Activated naive CD4-positive, alpha-beta T cell treated with anti-CD3 and anti-CD28 coated beads for 36 hours (primary cell): ENCODE measurements at regions of chr14 and their contacts with region 1.

Region 1: DNA sequence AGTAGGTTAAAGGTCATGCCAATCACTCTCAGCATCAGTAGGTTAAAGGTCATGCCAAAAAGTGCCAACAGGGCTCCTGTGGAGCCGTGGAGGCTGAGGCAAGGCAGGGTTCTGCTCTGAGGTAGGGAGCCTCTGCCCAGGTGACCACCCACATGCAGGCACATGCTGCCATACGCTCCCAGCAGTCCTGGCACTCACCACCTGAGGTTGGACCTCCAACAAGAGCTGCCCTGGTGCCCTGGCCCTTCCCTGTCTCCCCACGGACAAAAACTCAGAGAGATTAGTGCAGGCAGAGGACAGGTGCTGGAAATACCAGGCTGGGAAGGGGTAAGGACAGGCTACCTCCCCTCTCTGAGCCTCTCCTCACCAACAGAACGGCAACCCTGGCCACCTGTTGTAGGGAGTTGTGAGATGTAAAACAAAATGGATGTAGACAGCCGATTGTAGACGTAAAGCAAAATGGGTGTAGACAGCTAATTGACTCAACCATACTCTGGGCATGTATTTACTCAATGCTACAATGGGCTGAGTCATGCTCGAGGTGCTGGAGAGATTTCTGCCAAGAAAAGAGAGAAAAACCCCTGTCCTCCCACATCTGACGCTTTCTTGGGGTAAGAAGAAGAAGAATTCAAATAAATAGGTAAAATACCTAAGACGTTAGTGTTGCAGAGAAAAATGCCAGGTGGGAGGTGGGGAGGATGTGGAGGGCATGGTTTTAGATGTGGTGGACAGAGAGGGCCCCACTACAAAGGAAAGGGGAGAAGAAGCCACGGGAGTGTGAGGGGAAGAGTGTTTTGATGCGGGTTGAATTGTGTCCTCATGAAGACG is 32.4 kb downstream of the LTBP2 start:
- DNase-seq: peak; percentile 88
- H3K4me3 Mint-ChIP-seq: no peak overlapping the region
- H3K27ac Mint-ChIP-seq: peak overlapping the region; percentile 82
- H3K4me1 Mint-ChIP-seq: peaks cover 36% of the 10 kb centered on the region
- H3K27me3 Mint-ChIP-seq: peaks cover 2% of the 10 kb centered on the region

Region 2: GRCh38 chr14:74618078-74618952 is 38.7 kb after region 1 on chr14:
- CTCF ChIA-PET with region 1: interaction called, 7 read pairs
- intact Hi-C with region 1: loop called (anchors 1 kb)
- DNase-seq: peak; percentile 89
- H3K4me3 Mint-ChIP-seq: no peak overlapping the region
- H3K27ac Mint-ChIP-seq: peak overlapping the region; percentile 63
- H3K4me1 Mint-ChIP-seq: peaks cover 62% of the 10 kb centered on the region
- H3K27me3 Mint-ChIP-seq: peaks cover 4% of the 10 kb centered on the region

Region 3: GRCh38 chr14:76236172-76237130 is 1656.8 kb after region 1 on chr14:
- CTCF ChIA-PET with region 1: no interaction called
- intact Hi-C with region 1: no loop called
- DNase-seq: no peak
- H3K4me3 Mint-ChIP-seq: no peak overlapping the region
- H3K27ac Mint-ChIP-seq: no peak overlapping the region
- H3K4me1 Mint-ChIP-seq: no peaks in the 10 kb centered on the region
- H3K27me3 Mint-ChIP-seq: no peaks in the 10 kb centered on the region